Endothelial cell of umbilical vein (primary cell): ENCODE measurements at regions of chr12 and their contacts with region 1.

Region 1: DNA sequence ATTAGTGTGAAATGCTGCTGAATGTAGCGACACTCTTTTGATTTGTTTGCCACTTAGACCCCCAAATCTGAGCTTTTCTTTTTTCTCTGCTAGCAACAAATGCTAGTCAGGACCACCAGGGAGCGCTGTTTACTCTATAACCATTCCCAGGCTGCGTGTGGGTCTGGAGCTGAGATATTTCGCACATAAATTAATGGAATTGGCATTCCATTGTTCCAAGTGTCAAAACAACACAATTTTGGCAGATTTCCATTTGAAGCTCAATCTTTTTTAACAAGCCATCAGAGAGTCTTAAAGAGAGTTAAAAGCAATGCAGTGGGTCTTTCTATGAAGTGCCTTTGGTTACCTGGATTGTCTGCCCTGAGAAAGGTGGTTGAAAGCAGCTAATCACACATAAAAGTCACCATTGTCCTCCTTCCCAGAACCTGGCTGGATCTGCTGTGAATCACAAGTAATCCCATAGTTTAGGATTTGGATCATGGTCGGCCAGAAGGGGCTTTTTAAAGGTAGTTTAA is 7.4 kb upstream of the TMEM132C start:
- DNase-seq: peak; percentile 2
- H3K4me3 ChIP-seq: no peak overlapping the region
- H3K27ac ChIP-seq: no peak overlapping the region
- H3K4me1 ChIP-seq: no peaks in the 10 kb centered on the region
- H3K27me3 ChIP-seq: no peaks in the 10 kb centered on the region
- CTCF ChIP-seq: peak; percentile 13 to 15
- POLR2A ChIP-seq: no peak

Region 2: DNA sequence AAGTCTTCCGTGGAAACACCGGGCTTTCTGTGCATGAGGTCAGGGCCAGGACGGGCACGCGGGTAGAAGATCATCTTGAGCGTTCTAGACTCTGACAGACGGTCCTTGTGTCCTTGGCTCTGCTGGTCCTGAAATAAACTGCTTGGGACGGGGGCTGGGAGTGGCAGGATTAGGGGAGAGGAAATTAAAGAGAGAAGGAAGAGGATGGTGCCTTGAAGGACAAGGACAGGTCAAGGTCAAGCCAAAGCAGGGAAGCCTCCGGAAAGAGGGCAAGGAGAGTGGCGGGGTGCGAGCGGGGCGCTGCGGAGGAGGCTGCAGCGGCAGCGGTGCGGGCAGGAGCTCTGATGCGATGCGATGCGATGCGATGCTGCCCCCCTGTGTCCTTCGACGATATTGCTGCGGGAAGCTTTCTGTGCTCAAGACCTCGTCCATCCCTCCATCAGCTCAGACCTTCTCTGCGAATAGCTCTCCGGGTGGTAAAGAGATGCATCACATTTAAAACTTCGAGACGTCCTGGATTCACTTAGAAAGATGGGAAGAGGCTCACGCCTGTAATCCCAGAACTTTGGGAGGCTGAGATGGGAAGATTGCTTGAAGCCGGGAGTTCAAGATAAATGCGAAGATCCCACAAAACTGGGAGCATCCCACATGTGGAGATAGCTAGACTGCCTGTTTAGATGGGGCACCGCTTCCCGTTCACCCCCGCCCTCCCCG is 1754.3 kb after region 1 on chr12:
- CTCF ChIA-PET with region 1: interaction called, 10 read pairs
- POLR2A ChIA-PET with region 1: no interaction called
- dilution Hi-C with region 1: no loop called
- intact Hi-C with region 1: no loop called
- DNase-seq: no peak
- H3K4me3 ChIP-seq: no peak overlapping the region
- H3K27ac ChIP-seq: no peak overlapping the region
- H3K4me1 ChIP-seq: no peaks in the 10 kb centered on the region
- H3K27me3 ChIP-seq: no peaks in the 10 kb centered on the region
- CTCF ChIP-seq: peak; percentile 48 to 59
- POLR2A ChIP-seq: no peak